ENCODE measurements at regions of chr6 and their contacts with region 1.

Region 1: GRCh38 chr6:127539272-127539671 is 20.1 kb upstream of the MTCL3 start:
- DNase-seq: no peak
- H3K4me3 ChIP-seq: no peak overlapping the region
- CTCF ChIP-seq: no peak

Region 2: DNA sequence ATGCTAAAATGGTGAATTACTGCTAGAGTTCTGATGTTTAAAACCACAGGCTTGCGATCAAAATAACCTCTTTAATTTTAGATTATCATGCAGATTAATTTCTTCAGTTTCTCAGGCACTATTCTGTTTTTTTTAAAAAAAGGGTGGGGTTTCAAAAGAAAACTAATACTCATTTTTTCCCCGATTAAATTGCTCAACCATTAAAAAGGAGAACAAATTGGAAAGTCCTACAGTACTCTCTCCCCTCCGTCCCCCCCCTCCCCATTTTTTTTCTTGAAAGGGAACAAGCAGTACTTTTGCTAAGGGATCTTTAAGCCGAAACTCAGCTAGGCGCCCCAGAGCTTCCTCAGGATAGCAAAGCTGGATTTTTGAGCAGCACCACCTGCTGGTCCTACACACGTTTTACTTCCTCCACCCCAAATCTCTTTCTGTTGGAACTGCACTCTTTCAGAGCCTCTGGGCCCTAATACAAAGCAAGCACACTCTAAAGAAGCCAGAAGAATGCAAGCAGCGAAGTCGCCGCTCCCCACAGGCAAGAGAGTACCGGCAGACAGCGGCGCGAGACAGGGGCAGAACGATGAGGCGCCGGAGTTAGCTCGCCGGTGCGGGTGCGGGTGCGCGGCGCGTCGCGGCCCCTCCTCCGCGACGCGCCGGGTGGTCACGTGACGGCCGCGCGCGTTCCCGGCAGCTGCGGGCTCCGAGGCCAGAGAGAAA is 272.9 kb before region 1 on chr6 and contains the start of gene RNF146:
- CTCF ChIA-PET with region 1: interaction called, 13 read pairs
- POLR2A ChIA-PET with region 1: no interaction called
- DNase-seq: peak; percentile 21
- H3K4me3 ChIP-seq: peak within 1 kb of the TSS; percentile 92
- CTCF ChIP-seq: peak; percentile 75

Region 3: GRCh38 chr6:127459231-127459641 is 80.0 kb before region 1 on chr6 and contains the start of gene KIAA0408:
- CTCF ChIA-PET with region 1: interaction called, 112 read pairs
- POLR2A ChIA-PET with region 1: no interaction called
- DNase-seq: peak; percentile 36
- H3K4me3 ChIP-seq: peak within 1 kb of the TSS; percentile 9
- CTCF ChIP-seq: no peak

Region 4: GRCh38 chr6:128036808-128037570 is 497.7 kb after region 1 on chr6:
- CTCF ChIA-PET with region 1: no interaction called
- POLR2A ChIA-PET with region 1: no interaction called
- DNase-seq: no peak
- H3K4me3 ChIP-seq: no peak overlapping the region
- CTCF ChIP-seq: no peak

Measured in AG04449 (cell line).